Activated naive CD4-positive, alpha-beta T cell treated with anti-CD3 and anti-CD28 coated beads, Interleukin-2, amount 10 ng/mL, durations not matched to agents 7 days and 5 days (primary cell): ENCODE measurements at regions of chr10 and their contacts with region 1.

Region 1: GRCh38 chr10:73650537-73651331 is 5.1 kb downstream of the SYNPO2L start:
- DNase-seq: no peak
- H3K4me3 Mint-ChIP-seq: no peak overlapping the region
- H3K27ac Mint-ChIP-seq: no peak overlapping the region
- H3K4me1 Mint-ChIP-seq: peaks cover 5% of the 10 kb centered on the region
- H3K27me3 Mint-ChIP-seq: peaks cover 44% of the 10 kb centered on the region

Region 2: GRCh38 chr10:73529089-73529832 is 121.5 kb before region 1 on chr10:
- CTCF ChIA-PET with region 1: interaction called, 134 read pairs
- DNase-seq: peak; percentile 60
- H3K4me3 Mint-ChIP-seq: no peak overlapping the region
- H3K27ac Mint-ChIP-seq: no peak overlapping the region
- H3K4me1 Mint-ChIP-seq: no peaks in the 10 kb centered on the region
- H3K27me3 Mint-ChIP-seq: no peaks in the 10 kb centered on the region

Region 3: GRCh38 chr10:73746721-73747120 is 96.0 kb after region 1 on chr10:
- CTCF ChIA-PET with region 1: no interaction called
- DNase-seq: no peak
- H3K4me3 Mint-ChIP-seq: peak overlapping the region; percentile 58
- H3K27ac Mint-ChIP-seq: no peak overlapping the region
- H3K4me1 Mint-ChIP-seq: peaks cover 50% of the 10 kb centered on the region
- H3K27me3 Mint-ChIP-seq: no peaks in the 10 kb centered on the region

Region 4: DNA sequence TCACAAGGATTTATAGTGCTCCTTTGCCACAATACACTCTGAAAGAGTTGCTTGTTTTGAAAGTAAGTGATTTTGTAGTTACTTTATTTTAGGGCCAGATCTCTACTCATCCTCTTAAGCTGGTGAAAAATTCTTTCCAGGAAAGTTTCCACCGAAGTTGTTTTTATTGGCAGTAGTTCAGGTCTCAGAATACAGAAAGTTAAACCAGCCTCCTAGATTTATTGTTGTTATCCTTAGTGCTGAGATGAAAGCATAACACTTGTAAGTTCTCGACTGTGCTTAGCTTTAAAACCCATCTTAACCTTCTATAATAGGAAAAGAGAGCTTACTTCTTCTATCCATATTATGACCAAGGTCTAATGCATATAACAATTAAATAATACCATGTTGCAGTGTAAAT is 494.4 kb after region 1 on chr10:
- CTCF ChIA-PET with region 1: no interaction called
- DNase-seq: no peak
- H3K4me3 Mint-ChIP-seq: no peak overlapping the region
- H3K27ac Mint-ChIP-seq: no peak overlapping the region
- H3K4me1 Mint-ChIP-seq: peaks cover 21% of the 10 kb centered on the region
- H3K27me3 Mint-ChIP-seq: no peaks in the 10 kb centered on the region